ENCODE measurements at regions of chr14 and their contacts with region 1.

Region 1: DNA sequence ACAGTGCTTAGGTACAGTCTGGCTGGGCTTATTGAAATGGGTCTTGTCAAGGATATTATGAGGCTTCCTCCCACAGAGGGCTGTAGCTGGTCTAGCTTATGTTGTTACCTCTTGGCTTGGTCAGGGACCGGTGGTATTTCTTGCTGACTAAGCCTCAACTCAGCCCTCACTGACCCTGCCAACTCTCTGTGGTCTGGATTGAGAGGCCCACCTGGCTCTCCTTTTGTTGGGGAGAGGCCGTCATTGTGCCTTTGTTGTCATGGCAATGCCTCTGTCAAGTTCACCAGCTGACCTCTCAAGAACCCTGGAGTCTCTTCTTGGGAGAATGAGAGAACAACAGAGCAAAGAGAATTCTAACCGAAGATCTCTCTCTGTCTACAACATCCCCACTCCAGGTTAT is 245.6 kb upstream of the NPAS3 start:
- DNase-seq: no peak
- ATAC-seq: no peak
- H3K4me3 ChIP-seq: no peak overlapping the region
- H3K27ac ChIP-seq: no peak overlapping the region
- H3K4me1 ChIP-seq: no peaks in the 10 kb centered on the region
- H3K27me3 ChIP-seq: no peaks in the 10 kb centered on the region
- CTCF ChIP-seq: no peak
- EP300 ChIP-seq: no peak
- POLR2A ChIP-seq: no peak
- RAD21 ChIP-seq: no peak

Region 2: DNA sequence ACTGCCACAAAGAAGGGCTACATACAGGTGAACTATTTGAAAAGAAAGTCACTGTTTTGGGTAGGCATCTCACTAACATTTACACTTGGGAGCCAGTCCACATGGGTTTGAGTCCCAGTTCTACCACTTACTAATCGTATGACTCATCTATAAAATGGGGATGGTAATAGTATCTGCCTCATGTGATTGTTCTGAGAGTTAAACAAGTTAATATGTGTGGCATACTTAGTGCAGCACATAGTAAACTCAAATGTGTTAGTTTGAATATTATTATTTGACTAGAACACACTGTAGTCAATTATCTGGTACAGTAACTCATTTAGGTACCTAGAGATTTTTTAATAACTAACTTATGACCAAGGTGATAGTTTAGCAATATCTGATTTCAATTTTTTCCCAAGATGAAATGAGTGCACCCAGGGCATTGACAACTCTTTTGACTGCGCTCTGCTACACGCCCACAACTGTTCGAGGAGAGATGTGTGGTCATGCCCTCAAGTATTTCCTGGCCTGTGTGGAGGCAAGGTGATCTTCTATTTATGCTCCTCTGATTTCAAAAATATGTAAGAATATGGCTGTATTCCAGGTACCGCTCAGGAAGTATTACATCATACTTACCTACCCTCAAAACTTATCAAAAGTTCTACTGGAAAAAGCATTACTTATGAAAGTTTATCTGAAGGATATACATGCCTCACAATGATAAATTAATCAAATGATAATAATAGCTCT is 1468.4 kb after region 1 on chr14:
- CTCF ChIA-PET with region 1: no interaction called
- POLR2A ChIA-PET with region 1: no interaction called
- in situ Hi-C with region 1: loop called (anchors 25 kb)
- intact Hi-C with region 1: no loop called
- DNase-seq: no peak
- ATAC-seq: no peak
- H3K4me3 ChIP-seq: no peak overlapping the region
- H3K27ac ChIP-seq: no peak overlapping the region
- H3K4me1 ChIP-seq: no peaks in the 10 kb centered on the region; a peak in 1 of 5 replicates
- H3K27me3 ChIP-seq: no peaks in the 10 kb centered on the region; a peak in 1 of 5 replicates
- CTCF ChIP-seq: no peak
- EP300 ChIP-seq: no peak
- POLR2A ChIP-seq: no peak
- RAD21 ChIP-seq: no peak

Measured in K562 (cell line).